ENCODE measurements at regions of chr5 and their contacts with region 1.

Region 1: GRCh38 chr5:112995764-112996618 is 19.4 kb downstream of the DCP2 start:
- DNase-seq: peak; percentile 61
- ATAC-seq: peak; percentile 73 to 85

Region 2: DNA sequence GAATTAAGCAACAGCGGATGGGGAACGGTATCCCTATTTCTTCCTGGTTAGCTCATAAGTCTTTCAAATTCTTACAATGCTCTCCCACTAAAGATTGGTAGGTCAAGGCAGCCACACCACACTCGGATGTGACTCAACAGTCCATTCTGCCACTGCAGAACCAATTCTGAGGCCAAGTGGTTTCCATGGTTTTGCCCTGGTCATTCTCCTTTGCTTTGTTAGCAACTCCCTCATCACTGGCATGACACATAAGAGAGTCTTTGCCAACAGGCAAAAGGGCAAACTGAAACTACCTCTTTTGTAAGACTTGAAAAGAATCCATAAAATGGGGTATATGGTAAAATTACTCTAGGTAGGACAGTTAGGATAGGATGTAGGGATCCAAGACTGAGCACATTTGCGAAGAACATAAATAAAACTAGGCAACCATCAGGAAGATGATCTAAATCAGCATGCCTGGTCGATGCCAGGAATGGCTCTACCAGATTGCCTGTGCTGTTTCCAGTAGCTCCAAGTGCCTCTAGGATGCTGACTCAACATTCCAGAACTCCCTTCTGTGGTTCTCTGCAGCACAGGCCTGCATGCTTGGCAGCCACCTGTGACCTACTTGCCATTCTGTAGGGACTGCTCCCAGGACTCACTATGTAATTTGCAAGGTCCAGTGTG is 86.0 kb after region 1 on chr5:
- intact Hi-C with region 1: no loop called
- DNase-seq: no peak
- ATAC-seq: peak; percentile 65 to 72

Region 3: GRCh38 chr5:113330533-113331208 is 334.7 kb after region 1 on chr5:
- intact Hi-C with region 1: loop called in 1 of 2 experiments (anchors 2 kb)
- DNase-seq: peak; percentile 64
- ATAC-seq: peak; percentile 88 to 89

Region 4: GRCh38 chr5:113513384-113514288 is 517.6 kb after region 1 on chr5 and contains the start of gene YTHDC2:
- intact Hi-C with region 1: loop called in 1 of 2 experiments (anchors 5 kb)
- DNase-seq: peak; percentile 92
- ATAC-seq: peak; percentile 99
- total RNA-seq, gene YTHDC2: 12.6 to 20.3 TPM

Region 5: DNA sequence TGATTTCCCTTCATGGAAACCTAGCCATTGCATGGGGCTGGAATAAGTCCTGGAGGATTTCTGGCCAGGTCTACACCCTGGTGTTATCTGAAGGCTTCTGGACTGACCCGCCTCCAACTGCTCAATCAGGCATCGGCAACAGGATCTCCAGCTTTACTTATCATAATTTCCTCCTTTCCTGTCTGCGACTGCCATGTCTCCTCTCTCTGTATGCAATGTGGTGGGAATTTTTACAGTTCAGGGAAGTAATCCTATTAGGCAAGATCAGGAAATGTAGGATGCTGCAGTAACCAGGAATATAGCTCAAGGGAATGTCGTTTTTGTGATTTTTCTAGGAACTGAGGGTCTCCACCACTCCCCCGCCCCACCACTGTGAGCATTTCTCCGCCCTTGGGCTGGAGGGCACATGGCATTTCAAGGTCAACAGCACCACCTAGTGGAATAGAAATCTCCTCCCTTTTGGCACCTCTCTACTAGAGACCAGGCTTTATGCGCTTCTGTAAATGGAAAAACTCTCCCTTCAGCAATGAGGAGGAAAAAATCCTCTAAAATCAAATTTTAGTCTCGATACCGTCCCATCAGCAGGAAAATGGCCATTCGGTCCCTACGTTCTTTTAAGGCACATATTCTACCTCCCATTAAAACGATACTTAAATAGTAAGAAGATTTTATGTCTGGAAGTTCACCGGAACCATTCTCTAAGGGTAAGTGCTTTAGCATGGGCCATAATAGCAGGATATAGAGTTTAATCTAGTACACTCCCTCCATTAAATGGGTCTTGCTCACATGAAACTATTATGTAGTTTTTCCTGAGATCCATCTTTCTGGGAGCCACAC is 610.5 kb after region 1 on chr5:
- intact Hi-C with region 1: loop called in 1 of 2 experiments (anchors 2 kb)
- DNase-seq: peak; percentile 34
- ATAC-seq: peak; percentile 90 to 94

Measured in left cardiac atrium (tissue), 4 donors.